MCF 10A (cell line): ENCODE measurements at regions of chr12 and their contacts with region 1.

Region 1: DNA sequence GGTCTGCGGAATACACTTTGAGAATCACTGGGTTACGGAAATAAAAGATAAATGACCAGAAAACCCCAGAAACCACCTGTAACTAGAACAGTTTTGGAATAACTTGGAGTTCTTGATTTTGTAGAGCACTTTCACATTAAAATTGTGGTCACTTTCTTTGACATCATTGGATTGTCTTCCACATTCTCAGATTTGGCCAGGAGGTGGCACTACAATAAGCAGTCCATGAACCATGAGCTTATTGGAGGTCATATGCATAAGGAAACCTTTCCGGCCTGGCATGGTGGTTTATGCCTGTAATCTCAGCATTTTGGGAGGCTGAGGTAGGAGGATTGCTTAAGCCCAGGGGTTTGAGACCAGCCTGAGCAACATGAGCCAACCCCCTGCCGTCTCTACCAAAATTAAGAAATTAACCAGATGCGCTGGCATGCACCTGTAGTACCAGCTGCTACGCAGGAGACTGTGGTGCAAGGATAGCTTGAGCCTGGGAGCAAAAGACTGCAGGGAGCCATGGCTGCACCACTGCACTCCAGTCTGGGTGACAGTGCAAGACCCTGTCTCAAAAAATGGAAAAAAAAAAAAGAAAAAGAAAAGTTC is 107.7 kb upstream of the CAND1 start:
- DNase-seq: peak; percentile 61
- H3K4me3 Mint-ChIP-seq: no peak overlapping the region
- H3K27ac Mint-ChIP-seq: no peak overlapping the region
- H3K4me1 Mint-ChIP-seq: no peaks in the 10 kb centered on the region
- H3K27me3 Mint-ChIP-seq: peaks cover 59% of the 10 kb centered on the region
- CTCF ChIP-seq: peak; percentile 41

Region 2: GRCh38 chr12:67148265-67148664 is 13.2 kb before region 1 on chr12:
- CTCF ChIA-PET with region 1: interaction called, 10 read pairs
- POLR2A ChIA-PET with region 1: no interaction called
- intact Hi-C with region 1: no loop called
- DNase-seq: peak; percentile 12
- H3K4me3 Mint-ChIP-seq: no peak overlapping the region
- H3K27ac Mint-ChIP-seq: no peak overlapping the region
- H3K4me1 Mint-ChIP-seq: no peaks in the 10 kb centered on the region
- H3K27me3 Mint-ChIP-seq: no peaks in the 10 kb centered on the region
- CTCF ChIP-seq: no peak